ENCODE measurements at regions of chr12 and their contacts with region 1.

Region 1: GRCh38 chr12:24109381-24110039 is 160.0 kb upstream of the SOX5 start:
- DNase-seq: peak; percentile 64
- H3K4me3 ChIP-seq: no peak overlapping the region
- H3K27ac ChIP-seq: peak overlapping the region; percentile 54
- H3K4me1 ChIP-seq: peaks cover 38% of the 10 kb centered on the region
- H3K27me3 ChIP-seq: no peaks in the 10 kb centered on the region
- CTCF ChIP-seq: peak; percentile 81

Region 2: DNA sequence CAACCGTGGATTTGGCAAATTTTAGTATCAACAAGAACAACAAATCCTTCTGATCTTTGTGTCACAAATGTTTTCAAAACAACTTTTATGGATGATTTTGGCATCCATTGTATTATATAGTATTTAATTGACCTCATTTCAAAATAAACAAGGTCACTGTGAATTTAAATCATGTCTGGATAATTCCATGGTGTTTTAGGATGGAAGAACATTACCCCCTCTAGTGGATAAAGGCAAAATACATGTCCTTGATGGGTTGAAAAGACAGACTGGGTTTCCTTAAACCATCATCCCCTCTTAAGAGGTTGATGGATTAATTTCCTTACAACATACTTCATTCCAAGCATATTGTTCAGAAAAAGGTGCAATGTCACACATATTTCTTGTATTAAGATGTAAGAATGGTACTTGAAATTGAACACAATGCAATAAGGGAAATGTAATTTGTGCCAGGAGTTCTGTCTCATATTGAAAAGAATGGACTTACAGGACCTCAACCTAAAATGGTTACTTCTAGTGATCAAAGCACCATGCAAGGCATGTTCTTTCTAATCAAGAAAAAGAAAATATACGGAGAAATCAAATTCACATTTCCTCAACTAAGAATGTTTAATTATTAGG is 487.4 kb after region 1 on chr12:
- CTCF ChIA-PET with region 1: no interaction called
- POLR2A ChIA-PET with region 1: no interaction called
- intact Hi-C with region 1: loop called (anchors 2 kb)
- DNase-seq: peak; percentile 77
- H3K4me3 ChIP-seq: no peak overlapping the region
- H3K27ac ChIP-seq: no peak overlapping the region
- H3K4me1 ChIP-seq: peaks cover 44% of the 10 kb centered on the region
- H3K27me3 ChIP-seq: no peaks in the 10 kb centered on the region
- CTCF ChIP-seq: peak; percentile 76

Region 3: DNA sequence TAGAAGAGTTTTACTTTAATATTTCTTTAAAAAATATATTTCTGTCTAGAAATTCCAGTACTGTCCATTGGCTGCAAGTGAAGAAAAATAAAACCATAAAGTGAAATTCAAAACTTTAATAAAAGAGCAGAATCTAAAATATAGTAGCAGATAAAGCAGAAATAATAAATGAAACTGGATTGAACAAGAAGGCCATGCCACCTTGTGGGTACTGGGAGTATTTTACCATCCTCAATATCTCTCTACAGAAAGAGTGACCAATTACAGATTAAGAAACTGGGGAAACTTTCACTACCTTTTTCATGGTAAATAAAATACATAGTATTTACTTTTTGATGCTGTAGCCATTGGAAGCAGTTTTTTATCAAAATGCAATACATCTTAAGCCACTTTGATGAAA is 618.9 kb after region 1 on chr12:
- CTCF ChIA-PET with region 1: no interaction called
- POLR2A ChIA-PET with region 1: no interaction called
- intact Hi-C with region 1: loop called (anchors 10 kb)
- DNase-seq: peak; percentile 63
- H3K4me3 ChIP-seq: no peak overlapping the region
- H3K27ac ChIP-seq: no peak overlapping the region
- H3K4me1 ChIP-seq: peaks cover 12% of the 10 kb centered on the region
- H3K27me3 ChIP-seq: no peaks in the 10 kb centered on the region
- CTCF ChIP-seq: peak; percentile 81

Measured in A673 (cell line).